CD8-positive, alpha-beta T cell (primary cell): ENCODE measurements at regions of chr12 and their contacts with region 1.

Region 1: GRCh38 chr12:112382232-112382796 is at the start of gene HECTD4:
- DNase-seq: peak; percentile 77 to 96 (median 93)
- ATAC-seq: peak; percentile 98
- H3K4me3 ChIP-seq: peak within 1 kb of the TSS; percentile 72 to 83
- H3K4me3 Mint-ChIP-seq: peak within 1 kb of the TSS; percentile 95
- H3K27ac ChIP-seq: peak within 1 kb of the TSS; percentile 43 to 68
- H3K27ac Mint-ChIP-seq: peak within 1 kb of the TSS; percentile 88
- H3K4me1 ChIP-seq: peaks cover 13% of the 10 kb centered on the region
- H3K4me1 Mint-ChIP-seq: peaks cover 25% of the 10 kb centered on the region
- H3K27me3 ChIP-seq: no peaks in the 10 kb centered on the region
- H3K27me3 Mint-ChIP-seq: peaks cover under 1% of the 10 kb centered on the region
- CTCF ChIP-seq: no peak
- total RNA-seq, gene HECTD4: 31.8 to 39.6 TPM

Region 2: GRCh38 chr12:112012775-112013600 is 369.3 kb before region 1 on chr12 and contains the starts of genes ERP29 and TMEM116:
- CTCF ChIA-PET with region 1: no interaction called
- POLR2A ChIA-PET with region 1: no interaction called
- intact Hi-C with region 1: loop called in 1 of 2 experiments (anchors 1 kb)
- DNase-seq: peak; percentile 99 to 100 (median 100)
- ATAC-seq: peak; percentile 82
- H3K4me3 ChIP-seq: peak within 1 kb of the TSS; percentile 94
- H3K4me3 Mint-ChIP-seq: peak within 1 kb of the TSS; percentile 88
- H3K27ac ChIP-seq: peak within 1 kb of the TSS; percentile 95
- H3K27ac Mint-ChIP-seq: peak within 1 kb of the TSS; percentile 99
- H3K4me1 ChIP-seq: peaks cover 43% of the 10 kb centered on the region
- H3K4me1 Mint-ChIP-seq: peaks cover 59% of the 10 kb centered on the region
- H3K27me3 ChIP-seq: no peaks in the 10 kb centered on the region
- H3K27me3 Mint-ChIP-seq: no peaks in the 10 kb centered on the region
- CTCF ChIP-seq: peak; percentile 66
- total RNA-seq, gene ERP29: 102 to 111 TPM
- total RNA-seq, gene TMEM116: 9.4 to 11.2 TPM

Region 3: DNA sequence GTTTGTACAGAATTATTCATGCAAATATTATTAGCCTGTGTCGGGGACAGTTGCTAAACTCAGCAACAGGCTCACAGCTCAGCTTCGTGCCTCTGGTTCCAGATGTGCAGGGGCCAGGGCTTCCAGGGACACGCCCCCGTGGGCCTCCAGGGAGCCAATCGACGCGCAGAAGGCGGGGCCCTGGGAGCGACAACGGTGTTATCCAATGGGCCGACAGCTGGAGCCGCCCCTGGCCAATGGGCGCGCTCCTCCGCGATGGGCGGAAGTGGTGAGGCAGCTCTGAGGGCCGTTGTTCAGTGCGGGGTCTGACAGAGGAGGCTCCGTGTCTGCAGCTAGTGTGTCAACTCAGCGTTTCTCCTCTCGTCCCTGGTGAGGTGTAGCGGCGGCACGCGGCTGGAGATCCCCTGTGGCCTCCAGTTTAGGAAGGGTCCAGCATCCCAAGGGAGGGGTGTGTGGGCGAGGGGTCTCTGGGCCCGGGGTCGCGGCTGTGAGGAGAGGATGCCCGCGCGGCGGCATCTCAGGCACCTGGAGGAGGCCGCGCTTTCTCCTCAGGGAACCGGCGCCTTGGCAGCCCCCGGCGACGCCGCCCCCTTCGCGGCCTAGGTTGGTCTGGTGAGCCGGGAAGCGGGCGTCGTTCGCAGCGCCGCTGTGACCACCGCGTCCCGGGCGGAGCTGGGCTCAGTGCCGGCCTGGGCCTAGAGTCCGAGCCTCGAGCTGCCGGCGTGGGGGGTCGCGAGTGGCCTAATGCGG is 256.9 kb before region 1 on chr12 and contains the start of gene TRAFD1:
- CTCF ChIA-PET with region 1: no interaction called
- POLR2A ChIA-PET with region 1: interaction called, 3 read pairs
- intact Hi-C with region 1: loop called (anchors 5 kb)
- DNase-seq: peak; percentile 96 to 99 (median 98)
- ATAC-seq: peak; percentile 97
- H3K4me3 ChIP-seq: peak within 1 kb of the TSS; percentile 93 to 98
- H3K4me3 Mint-ChIP-seq: peak within 1 kb of the TSS; percentile 85
- H3K27ac ChIP-seq: peak within 1 kb of the TSS; percentile 82 to 89
- H3K27ac Mint-ChIP-seq: peak within 1 kb of the TSS; percentile 87
- H3K4me1 ChIP-seq: peaks cover 38% of the 10 kb centered on the region
- H3K4me1 Mint-ChIP-seq: peaks cover 40% of the 10 kb centered on the region
- H3K27me3 ChIP-seq: no peaks in the 10 kb centered on the region
- H3K27me3 Mint-ChIP-seq: no peaks in the 10 kb centered on the region
- CTCF ChIP-seq: no peak
- total RNA-seq, gene TRAFD1: 21.1 to 25.4 TPM

Region 4: GRCh38 chr12:112239881-112240280 is 142.4 kb before region 1 on chr12:
- CTCF ChIA-PET with region 1: interaction called, 3 read pairs
- POLR2A ChIA-PET with region 1: no interaction called
- intact Hi-C with region 1: loop called in 1 of 2 experiments (anchors 10 kb)
- DNase-seq: no peak
- ATAC-seq: no peak
- H3K4me3 ChIP-seq: no peak overlapping the region
- H3K4me3 Mint-ChIP-seq: no peak overlapping the region
- H3K27ac ChIP-seq: no peak overlapping the region
- H3K27ac Mint-ChIP-seq: no peak overlapping the region
- H3K4me1 ChIP-seq: no peaks in the 10 kb centered on the region
- H3K4me1 Mint-ChIP-seq: no peaks in the 10 kb centered on the region
- H3K27me3 ChIP-seq: no peaks in the 10 kb centered on the region
- H3K27me3 Mint-ChIP-seq: no peaks in the 10 kb centered on the region
- CTCF ChIP-seq: no peak

Region 5: DNA sequence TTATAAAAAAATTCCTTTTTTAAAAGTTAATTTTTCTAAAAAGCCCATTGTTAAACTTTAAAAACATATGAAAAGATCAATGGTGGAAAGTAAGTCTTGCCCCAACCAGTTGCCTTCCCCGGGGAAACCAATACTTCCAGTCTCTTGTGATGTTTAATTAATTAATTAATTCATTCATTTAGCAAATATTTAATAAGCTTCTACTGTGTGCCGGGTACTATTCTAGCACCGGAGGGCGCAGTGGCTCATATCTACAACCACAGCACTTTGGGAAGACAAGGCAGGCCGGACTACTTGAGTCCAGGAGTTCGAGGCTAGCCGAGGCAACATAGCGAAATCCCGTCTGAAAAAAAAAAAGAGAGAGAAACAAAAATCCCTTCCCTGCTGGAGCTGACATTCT is 87.5 kb before region 1 on chr12:
- CTCF ChIA-PET with region 1: interaction called, 4 read pairs
- POLR2A ChIA-PET with region 1: no interaction called
- intact Hi-C with region 1: loop called (anchors 2 to 5 kb)
- DNase-seq: peak in 2 of 9 experiments; percentile 12 to 16
- ATAC-seq: no peak
- H3K4me3 ChIP-seq: no peak overlapping the region
- H3K4me3 Mint-ChIP-seq: no peak overlapping the region
- H3K27ac ChIP-seq: no peak overlapping the region
- H3K27ac Mint-ChIP-seq: no peak overlapping the region
- H3K4me1 ChIP-seq: no peaks in the 10 kb centered on the region
- H3K4me1 Mint-ChIP-seq: peaks cover 2% of the 10 kb centered on the region
- H3K27me3 ChIP-seq: no peaks in the 10 kb centered on the region
- H3K27me3 Mint-ChIP-seq: no peaks in the 10 kb centered on the region
- CTCF ChIP-seq: no peak

Region 6: GRCh38 chr12:112418608-112419298 is 36.4 kb after region 1 on chr12 and contains the start of gene PTPN11:
- CTCF ChIA-PET with region 1: interaction called, 5 read pairs
- POLR2A ChIA-PET with region 1: no interaction called
- intact Hi-C with region 1: loop called in 1 of 2 experiments (anchors 2 kb)
- DNase-seq: peak; percentile 81 to 96 (median 89)
- ATAC-seq: peak; percentile 89
- H3K4me3 ChIP-seq: peak within 1 kb of the TSS; percentile 75 to 98
- H3K4me3 Mint-ChIP-seq: peak within 1 kb of the TSS; percentile 94
- H3K27ac ChIP-seq: peak within 1 kb of the TSS; percentile 89 to 97
- H3K27ac Mint-ChIP-seq: peak within 1 kb of the TSS; percentile 95
- H3K4me1 ChIP-seq: peaks cover 21% of the 10 kb centered on the region
- H3K4me1 Mint-ChIP-seq: peaks cover 40% of the 10 kb centered on the region
- H3K27me3 ChIP-seq: no peaks in the 10 kb centered on the region
- H3K27me3 Mint-ChIP-seq: no peaks in the 10 kb centered on the region
- CTCF ChIP-seq: no peak
- total RNA-seq, gene PTPN11: 56.0 to 57.9 TPM